ENCODE measurements at regions of chr6 and their contacts with region 1.

Region 1: DNA sequence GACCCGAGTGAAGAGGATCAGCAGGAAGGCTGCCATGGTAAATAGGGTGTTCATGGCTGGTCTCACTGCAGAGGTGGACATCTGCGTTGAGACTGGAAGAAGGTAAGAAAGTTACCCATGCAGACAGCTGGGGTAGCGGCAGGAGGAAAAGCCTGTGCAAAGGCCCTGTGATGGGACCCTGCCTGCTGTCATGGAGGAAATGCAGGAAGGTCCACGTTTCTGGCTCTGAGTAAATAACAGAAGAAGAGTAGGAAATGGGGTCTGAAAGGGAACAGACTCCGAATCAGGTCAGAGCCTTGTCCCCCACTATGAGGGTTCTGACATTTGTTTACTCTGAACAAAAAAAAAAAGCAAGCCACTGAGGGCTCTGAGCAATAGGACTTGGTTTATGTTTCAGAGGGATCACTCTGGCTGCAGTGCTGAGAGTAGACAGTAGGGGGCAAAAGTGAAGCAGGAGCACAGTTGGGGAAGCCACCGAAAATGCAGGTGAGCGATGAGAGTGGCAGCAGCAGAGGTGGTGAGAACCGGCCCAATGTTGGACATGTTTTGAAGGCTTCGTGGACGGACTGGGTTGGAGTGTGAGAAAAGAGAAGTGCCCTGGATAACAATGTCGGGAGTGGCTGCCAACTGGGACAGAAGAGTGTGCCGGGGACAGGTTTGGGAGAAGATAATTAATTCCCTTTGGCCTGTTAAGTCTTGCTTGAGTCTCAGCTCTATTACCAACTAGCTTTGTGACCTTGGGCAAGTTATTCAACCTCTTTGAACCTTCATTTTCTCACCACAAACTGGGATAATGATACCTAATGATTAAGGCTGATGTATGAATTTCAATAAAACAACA is 57.9 kb upstream of the MAP7 start:
- DNase-seq: peak in 1 of 2 donors; percentile 84
- H3K4me3 ChIP-seq: no peak overlapping the region
- H3K27ac ChIP-seq: peak overlapping the region; percentile 79 to 87
- H3K4me1 ChIP-seq: peaks cover 8 to 20% of the 10 kb centered on the region in 2 donors
- H3K27me3 ChIP-seq: no peaks in the 10 kb centered on the region
- CTCF ChIP-seq: peak; percentile 60 to 76 (median 68)

Region 2: GRCh38 chr6:136550330-136551071 is 57.7 kb before region 1 on chr6 and contains the start of gene MAP7:
- intact Hi-C with region 1: no loop called
- DNase-seq: peak in 1 of 2 donors; percentile 75
- H3K4me3 ChIP-seq: peak within 1 kb of the TSS; percentile 97 to 98
- H3K27ac ChIP-seq: no peak within 1 kb of the TSS
- H3K4me1 ChIP-seq: peaks cover 4 to 8% of the 10 kb centered on the region in 2 donors
- H3K27me3 ChIP-seq: no peaks in the 10 kb centered on the region
- CTCF ChIP-seq: peak; percentile 65 to 84 (median 83)
- total RNA-seq, gene MAP7: not detected

Region 3: GRCh38 chr6:136582711-136583471 is 25.3 kb before region 1 on chr6:
- intact Hi-C with region 1: loop called (anchors 1 kb)
- DNase-seq: no peak
- H3K4me3 ChIP-seq: no peak overlapping the region
- H3K27ac ChIP-seq: peak overlapping the region; percentile 81 to 86
- H3K4me1 ChIP-seq: peaks cover 5 to 42% of the 10 kb centered on the region in 2 donors
- H3K27me3 ChIP-seq: no peaks in the 10 kb centered on the region
- CTCF ChIP-seq: peak; percentile 50 to 65 (median 63)

Region 4: DNA sequence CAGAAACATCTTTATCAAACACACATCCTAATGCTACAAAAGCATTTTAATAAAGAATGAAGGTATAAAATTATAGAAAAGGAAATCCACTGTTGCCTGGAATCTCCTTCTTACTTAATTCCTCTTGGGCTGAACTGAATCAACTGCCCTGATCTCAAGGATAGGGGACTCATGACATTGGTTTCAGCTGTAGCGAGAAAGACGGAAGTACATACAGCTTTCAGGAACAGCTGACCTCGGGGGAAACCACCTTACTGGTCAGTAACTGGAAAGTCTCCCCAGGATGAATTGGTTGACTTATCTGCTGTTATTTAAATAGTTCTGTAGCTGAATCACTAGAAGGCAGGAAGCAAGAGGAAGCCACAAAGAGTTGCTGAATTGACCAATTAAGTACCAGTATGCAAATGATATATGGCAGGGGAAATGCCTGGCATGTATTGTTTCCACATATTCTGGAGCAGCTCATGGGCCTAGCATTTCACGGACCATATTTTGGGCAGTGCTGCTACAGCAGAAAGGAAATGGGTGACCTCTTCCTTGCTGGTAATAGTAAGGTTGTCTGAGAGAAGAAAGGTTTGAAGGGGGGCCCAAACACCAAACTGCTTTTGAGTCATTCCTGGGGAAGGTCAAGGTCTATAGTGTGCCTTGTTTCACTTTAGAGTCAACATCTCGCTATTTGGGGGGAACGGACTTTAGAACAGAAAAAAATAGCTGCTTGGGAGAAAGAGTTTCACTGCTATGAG is 14.2 kb before region 1 on chr6:
- intact Hi-C with region 1: loop called (anchors 2 kb)
- DNase-seq: peak in 1 of 2 donors; percentile 77
- H3K4me3 ChIP-seq: no peak overlapping the region
- H3K27ac ChIP-seq: peak overlapping the region; percentile 60 to 73
- H3K4me1 ChIP-seq: peaks cover 0 to 10% of the 10 kb centered on the region in 2 donors
- H3K27me3 ChIP-seq: no peaks in the 10 kb centered on the region
- CTCF ChIP-seq: no peak

Region 5: DNA sequence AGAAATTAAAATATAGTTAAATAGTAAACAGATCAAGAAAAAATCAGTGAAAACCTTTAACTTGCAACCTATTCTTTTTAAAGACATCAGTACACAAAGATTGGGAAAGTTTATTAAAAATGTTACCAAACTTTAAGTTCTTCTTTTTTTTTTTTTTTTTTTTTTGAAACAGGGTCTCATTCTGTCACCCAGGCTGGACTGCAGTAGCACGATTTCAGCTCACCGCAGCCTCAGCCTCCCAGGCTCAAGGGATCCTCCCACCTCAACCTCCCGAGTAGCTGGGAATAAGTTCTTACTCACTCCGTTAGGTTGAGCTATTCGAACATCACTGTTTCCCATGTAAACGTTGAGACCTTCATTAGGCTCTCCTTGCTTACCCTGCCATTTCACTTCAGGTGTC is 178.5 kb after region 1 on chr6:
- intact Hi-C with region 1: no loop called
- DNase-seq: no peak
- H3K4me3 ChIP-seq: peak overlapping the region; percentile 74 to 81
- H3K27ac ChIP-seq: peak overlapping the region; percentile 93 to 99
- H3K4me1 ChIP-seq: peaks cover 18 to 64% of the 10 kb centered on the region in 2 donors
- H3K27me3 ChIP-seq: no peaks in the 10 kb centered on the region
- CTCF ChIP-seq: no peak

Region 6: DNA sequence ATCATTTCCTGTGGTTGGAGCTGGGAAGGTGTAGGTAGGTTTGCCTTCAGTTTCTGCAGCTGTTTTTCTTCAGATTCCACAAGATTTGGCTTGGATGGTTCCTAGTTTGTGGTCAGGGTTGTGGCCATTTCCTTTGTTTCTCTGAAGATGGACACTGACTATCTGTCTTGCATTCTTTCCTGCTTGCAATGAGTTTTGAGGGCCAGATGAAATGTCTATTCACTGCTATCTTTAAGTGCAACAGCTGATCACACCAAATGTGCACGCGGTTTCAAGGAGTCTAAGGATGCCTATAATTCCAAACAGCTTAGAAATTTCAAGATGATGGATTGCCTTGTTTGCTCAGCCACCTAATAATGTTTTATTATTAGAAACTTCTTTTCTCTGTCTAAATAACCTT is 408.2 kb after region 1 on chr6:
- intact Hi-C with region 1: no loop called
- DNase-seq: no peak
- H3K4me3 ChIP-seq: no peak overlapping the region
- H3K27ac ChIP-seq: no peak overlapping the region
- H3K4me1 ChIP-seq: no peaks in the 10 kb centered on the region
- H3K27me3 ChIP-seq: no peaks in the 10 kb centered on the region
- CTCF ChIP-seq: no peak

Region 7: GRCh38 chr6:137224799-137225198 is 616.6 kb after region 1 on chr6:
- intact Hi-C with region 1: loop called (anchors 2 kb)
- DNase-seq: no peak
- H3K4me3 ChIP-seq: no peak overlapping the region
- H3K27ac ChIP-seq: peak overlapping the region; percentile 58 to 81
- H3K4me1 ChIP-seq: peaks cover 2 to 34% of the 10 kb centered on the region in 2 donors
- H3K27me3 ChIP-seq: no peaks in the 10 kb centered on the region
- CTCF ChIP-seq: no peak